Ascending aorta (tissue), 2 donors: ENCODE measurements at regions of chr18 and their contacts with region 1.

Region 1: GRCh38 chr18:36672437-36673344 is 156.1 kb downstream of the TPGS2 start:
- DNase-seq: peak in 1 of 2 donors; percentile 67
- H3K4me3 ChIP-seq: peak overlapping the region; percentile 42 to 46
- H3K27ac ChIP-seq: peak overlapping the region; percentile 69 to 77
- H3K4me1 ChIP-seq: peaks cover 0 to 13% of the 10 kb centered on the region in 2 donors
- H3K27me3 ChIP-seq: no peaks in the 10 kb centered on the region
- CTCF ChIP-seq: no peak

Region 2: DNA sequence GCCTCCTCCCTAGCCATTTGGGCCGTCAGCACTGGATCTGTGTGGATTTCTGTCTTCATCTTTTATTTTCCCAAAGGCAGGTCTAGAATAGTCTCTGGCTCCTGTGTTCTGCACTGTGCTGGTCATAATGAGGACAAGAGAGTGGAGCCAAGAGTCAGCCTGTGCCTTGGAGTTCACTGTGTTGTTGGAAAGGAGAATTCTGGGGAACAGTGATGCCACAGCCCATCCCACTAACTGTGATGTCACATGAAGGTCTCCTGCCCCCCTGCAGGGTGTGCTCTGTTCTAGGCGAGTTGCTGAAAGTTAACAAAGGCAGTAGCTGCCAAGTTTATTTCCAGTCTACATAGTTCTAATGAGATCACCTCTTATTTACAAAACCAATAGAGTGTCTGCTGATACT is 92.4 kb before region 1 on chr18:
- intact Hi-C with region 1: loop called (anchors 5 kb)
- DNase-seq: peak in 1 of 2 donors; percentile 77
- H3K4me3 ChIP-seq: no peak overlapping the region
- H3K27ac ChIP-seq: peak overlapping the region; percentile 85 to 91
- H3K4me1 ChIP-seq: peaks cover 0 to 21% of the 10 kb centered on the region in 2 donors
- H3K27me3 ChIP-seq: no peaks in the 10 kb centered on the region
- CTCF ChIP-seq: peak in 1 of 3 experiments; percentile 20